MCF 10A (cell line): ENCODE measurements at regions of chr2 and their contacts with region 1.

Region 1: DNA sequence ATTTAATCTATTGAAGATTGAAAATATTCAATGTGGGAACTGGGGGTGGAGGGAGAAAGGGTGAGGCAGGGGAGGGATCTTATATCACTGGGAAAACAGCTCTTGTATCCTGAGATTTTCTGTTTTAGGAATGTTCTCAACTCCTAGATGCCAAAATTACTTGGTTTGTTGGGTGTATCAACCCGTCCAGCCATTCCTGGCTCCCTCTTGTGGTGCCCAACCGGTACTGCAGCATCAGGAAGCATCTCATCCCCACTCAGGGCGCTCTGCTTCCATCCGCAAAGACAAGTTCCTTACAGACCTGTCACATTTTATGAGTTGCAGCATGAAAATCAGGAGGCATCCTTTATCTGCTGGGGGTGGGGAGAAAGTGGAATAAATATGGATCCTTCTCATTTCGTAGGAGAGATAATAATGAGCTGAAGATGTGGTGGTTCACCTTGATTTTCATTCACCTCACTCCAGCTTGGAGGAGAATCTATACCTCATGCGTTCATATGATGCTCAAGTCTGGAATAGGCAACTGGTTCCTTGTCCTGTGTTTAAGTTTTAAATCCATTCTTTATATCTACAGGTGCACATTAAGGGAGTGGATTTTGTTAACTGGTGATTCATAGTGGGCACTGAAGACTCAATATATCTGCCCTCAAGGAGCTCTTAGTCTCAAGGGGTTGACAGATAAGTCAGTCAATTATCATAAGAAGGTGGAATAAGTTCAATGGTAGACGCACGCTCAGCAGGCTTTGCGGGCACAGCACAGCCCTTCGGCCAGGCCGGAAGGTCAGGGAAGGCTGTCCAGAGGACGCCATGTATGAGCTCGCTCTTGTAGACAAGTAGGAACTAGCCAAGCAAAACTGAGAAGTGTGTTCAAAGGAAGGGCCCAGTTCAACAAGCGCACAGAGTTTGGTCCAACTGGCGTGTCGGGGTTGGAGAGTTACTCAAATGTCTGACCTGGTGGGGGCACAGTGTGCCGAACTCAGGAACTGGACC is 127.3 kb downstream of the RNF144A start:
- DNase-seq: peak; percentile 67
- H3K4me3 Mint-ChIP-seq: no peak overlapping the region
- H3K27ac Mint-ChIP-seq: no peak overlapping the region
- H3K4me1 Mint-ChIP-seq: no peaks in the 10 kb centered on the region
- H3K27me3 Mint-ChIP-seq: peaks cover 79% of the 10 kb centered on the region
- CTCF ChIP-seq: peak; percentile 81

Region 2: GRCh38 chr2:6080932-6081753 is 963.4 kb before region 1 on chr2:
- CTCF ChIA-PET with region 1: no interaction called
- POLR2A ChIA-PET with region 1: no interaction called
- intact Hi-C with region 1: no loop called
- DNase-seq: no peak
- H3K4me3 Mint-ChIP-seq: peak overlapping the region; percentile 68
- H3K27ac Mint-ChIP-seq: peak overlapping the region; percentile 40
- H3K4me1 Mint-ChIP-seq: peaks cover 19% of the 10 kb centered on the region
- H3K27me3 Mint-ChIP-seq: no peaks in the 10 kb centered on the region
- CTCF ChIP-seq: no peak

Region 3: GRCh38 chr2:6826081-6826913 is 218.3 kb before region 1 on chr2:
- CTCF ChIA-PET with region 1: interaction called, 3 read pairs
- POLR2A ChIA-PET with region 1: no interaction called
- intact Hi-C with region 1: loop called (anchors 5 kb)
- DNase-seq: peak; percentile 79
- H3K4me3 Mint-ChIP-seq: no peak overlapping the region
- H3K27ac Mint-ChIP-seq: no peak overlapping the region
- H3K4me1 Mint-ChIP-seq: peaks cover 6% of the 10 kb centered on the region
- H3K27me3 Mint-ChIP-seq: no peaks in the 10 kb centered on the region
- CTCF ChIP-seq: peak; percentile 37

Region 4: DNA sequence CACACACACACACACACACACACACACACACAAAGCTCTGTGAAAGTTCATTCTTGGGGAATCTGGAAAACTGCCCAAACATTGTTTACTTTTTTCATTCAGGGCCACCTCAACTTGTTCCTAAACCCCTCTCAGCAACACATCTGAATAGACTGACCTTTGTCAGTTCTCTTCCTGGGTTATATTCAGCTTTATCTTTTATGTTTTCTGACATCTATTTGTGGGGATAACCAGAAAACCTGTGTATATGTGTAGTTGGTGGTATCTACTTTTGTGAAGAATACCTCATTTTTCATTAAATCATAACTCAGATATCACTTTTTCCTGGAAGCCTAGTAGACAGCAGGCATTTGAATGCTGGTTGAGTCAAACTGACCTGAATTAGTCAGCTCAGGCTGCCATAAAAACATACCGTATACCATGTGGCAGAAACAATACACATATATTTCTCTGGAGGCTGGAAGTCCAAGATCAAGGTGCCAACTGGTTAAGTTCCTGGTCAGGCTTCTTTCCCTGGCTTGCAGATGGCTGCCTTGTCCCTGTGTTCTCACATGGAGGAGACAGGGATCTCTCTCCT is 138.3 kb before region 1 on chr2:
- CTCF ChIA-PET with region 1: interaction called, 22 read pairs
- POLR2A ChIA-PET with region 1: no interaction called
- intact Hi-C with region 1: no loop called
- DNase-seq: no peak
- H3K4me3 Mint-ChIP-seq: no peak overlapping the region
- H3K27ac Mint-ChIP-seq: no peak overlapping the region
- H3K4me1 Mint-ChIP-seq: no peaks in the 10 kb centered on the region
- H3K27me3 Mint-ChIP-seq: peaks cover 81% of the 10 kb centered on the region
- CTCF ChIP-seq: no peak

Region 5: DNA sequence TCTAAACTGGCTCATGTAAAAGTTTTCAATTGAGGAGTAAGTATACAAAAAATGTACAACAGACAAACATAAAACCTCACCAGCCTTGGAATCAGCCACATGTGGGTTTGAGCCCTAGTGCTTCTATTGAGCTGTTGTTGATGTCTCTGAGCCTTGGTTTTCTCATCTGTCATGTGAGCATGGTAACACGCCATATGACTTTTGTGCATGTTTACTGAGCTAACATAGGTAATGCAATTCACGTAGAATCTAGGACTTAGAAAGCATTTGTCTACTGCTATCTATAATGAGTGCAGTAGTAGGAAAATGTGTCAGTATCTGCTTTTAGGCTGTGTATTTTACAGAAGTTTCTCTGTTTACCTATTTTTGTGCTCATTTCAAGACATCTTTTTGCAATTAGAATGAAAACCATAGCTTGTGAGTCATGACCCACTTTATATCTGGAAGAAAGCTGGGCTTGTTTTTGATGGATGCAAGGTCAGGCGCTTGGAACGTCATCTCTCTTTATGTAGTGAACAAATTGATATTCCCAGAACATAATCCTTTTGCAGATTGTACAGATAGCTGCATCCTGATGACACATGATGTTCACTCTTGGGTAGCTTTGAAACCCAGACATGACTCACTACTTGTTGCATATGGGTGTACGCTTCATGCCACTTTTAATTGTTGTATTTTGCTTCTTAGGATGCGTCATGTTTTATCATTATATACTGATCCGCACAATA is 33.0 kb before region 1 on chr2:
- CTCF ChIA-PET with region 1: interaction called, 10 read pairs
- POLR2A ChIA-PET with region 1: no interaction called
- intact Hi-C with region 1: no loop called
- DNase-seq: peak; percentile 86
- H3K4me3 Mint-ChIP-seq: no peak overlapping the region
- H3K27ac Mint-ChIP-seq: no peak overlapping the region
- H3K4me1 Mint-ChIP-seq: peaks cover 18% of the 10 kb centered on the region
- H3K27me3 Mint-ChIP-seq: peaks cover 35% of the 10 kb centered on the region
- CTCF ChIP-seq: no peak

Region 6: GRCh38 chr2:7031547-7032245 is 12.9 kb before region 1 on chr2:
- CTCF ChIA-PET with region 1: interaction called, 14 read pairs
- POLR2A ChIA-PET with region 1: interaction called, 5 read pairs
- intact Hi-C with region 1: no loop called
- DNase-seq: peak; percentile 99
- H3K4me3 Mint-ChIP-seq: no peak overlapping the region
- H3K27ac Mint-ChIP-seq: peak overlapping the region; percentile 46
- H3K4me1 Mint-ChIP-seq: no peaks in the 10 kb centered on the region
- H3K27me3 Mint-ChIP-seq: peaks cover 77% of the 10 kb centered on the region
- CTCF ChIP-seq: no peak